ENCODE measurements at regions of chr6 and their contacts with region 1.

Region 1: DNA sequence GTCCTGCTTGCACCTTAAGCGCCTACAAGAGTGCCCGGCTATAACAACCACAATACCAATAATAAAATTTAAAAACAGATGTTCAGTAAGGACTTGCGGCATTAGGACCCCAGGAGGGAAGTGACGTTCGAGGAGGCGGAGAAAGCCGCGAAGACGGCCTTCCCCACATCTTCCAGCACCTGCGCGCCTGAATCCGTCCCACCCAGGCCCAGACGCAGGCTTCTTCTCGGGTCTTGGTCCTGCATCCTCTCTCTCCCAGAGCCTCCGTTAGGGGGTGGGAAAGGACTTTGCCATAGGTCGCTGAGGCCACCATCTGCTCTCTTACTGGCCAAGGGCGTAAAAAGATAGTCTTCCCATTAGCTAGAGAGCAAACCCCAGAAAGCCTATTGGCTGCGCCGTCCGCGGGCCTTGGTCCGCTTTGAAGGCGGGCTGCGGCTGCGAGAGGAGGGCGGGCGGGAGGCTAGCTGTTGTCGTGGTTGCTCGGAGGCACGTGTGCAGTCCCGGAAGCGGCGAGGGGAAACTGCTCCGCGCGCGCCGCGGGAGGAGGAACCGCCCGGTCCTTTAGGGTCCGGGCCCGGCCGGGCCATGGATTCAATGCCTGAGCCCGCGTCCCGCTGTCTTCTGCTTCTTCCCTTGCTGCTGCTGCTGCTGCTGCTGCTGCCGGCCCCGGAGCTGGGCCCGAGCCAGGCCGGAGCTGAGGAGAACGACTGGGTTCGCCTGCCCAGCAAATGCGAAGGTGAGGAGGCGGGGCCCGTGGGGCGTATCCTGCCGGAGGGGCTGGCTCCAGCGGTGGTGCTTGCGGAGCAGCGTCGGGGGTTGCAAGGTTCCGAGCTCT is at the start of gene CNPY3:
- DNase-seq: peak; percentile 97
- ATAC-seq: peak; percentile 94
- H3K4me3 ChIP-seq: peak within 1 kb of the TSS; percentile 71 to 79 (median 78)
- H3K27ac ChIP-seq: peak within 1 kb of the TSS; percentile 83
- H3K4me1 ChIP-seq: peaks cover 64% of the 10 kb centered on the region
- H3K27me3 ChIP-seq: no peaks in the 10 kb centered on the region; a peak in 1 of 5 replicates
- CTCF ChIP-seq: peak; percentile 46
- EP300 ChIP-seq: peak in 1 of 2 experiments; percentile 8; a peak in 1 of 4 replicates
- POLR2A ChIP-seq: peak; percentile 70 to 74
- RAD21 ChIP-seq: peak; percentile 44
- total RNA-seq, gene CNPY3: 31.4 and 60.2 TPM in 2 replicates

Region 2: DNA sequence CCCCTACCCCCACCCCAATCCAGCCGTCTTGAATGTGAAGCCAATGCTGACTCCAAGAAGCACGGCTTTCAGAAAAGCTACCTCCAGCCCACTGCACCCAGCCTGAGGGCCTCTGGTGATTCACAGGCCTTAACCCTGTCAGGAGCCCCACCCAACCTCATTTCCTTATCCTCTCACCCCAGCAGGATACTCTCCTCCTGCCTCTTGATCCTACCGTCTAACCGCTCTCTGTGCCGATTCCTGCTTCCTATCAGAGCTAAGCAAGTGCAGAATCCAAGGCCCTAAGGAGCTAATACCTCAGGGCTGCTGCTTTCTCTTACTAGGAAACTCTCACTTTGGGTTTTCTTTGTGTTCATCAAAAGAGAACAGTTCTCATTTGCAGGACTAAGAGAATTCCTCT is 524.7 kb before region 1 on chr6:
- CTCF ChIA-PET with region 1: no interaction called
- POLR2A ChIA-PET with region 1: no interaction called
- in situ Hi-C with region 1: no loop called
- intact Hi-C with region 1: no loop called
- DNase-seq: no peak
- ATAC-seq: no peak
- H3K4me3 ChIP-seq: no peak overlapping the region
- H3K27ac ChIP-seq: no peak overlapping the region
- H3K4me1 ChIP-seq: no peaks in the 10 kb centered on the region
- H3K27me3 ChIP-seq: peaks cover 0 to 20% of the 10 kb centered on the region in 2 experiments; a peak in 2 of 5 replicates
- CTCF ChIP-seq: no peak
- EP300 ChIP-seq: no peak
- POLR2A ChIP-seq: no peak
- RAD21 ChIP-seq: no peak

Region 3: GRCh38 chr6:42766141-42766670 is 163.0 kb before region 1 on chr6:
- CTCF ChIA-PET with region 1: no interaction called
- POLR2A ChIA-PET with region 1: no interaction called
- in situ Hi-C with region 1: no loop called
- intact Hi-C with region 1: no loop called
- DNase-seq: no peak
- ATAC-seq: no peak
- H3K4me3 ChIP-seq: no peak overlapping the region
- H3K27ac ChIP-seq: no peak overlapping the region
- H3K4me1 ChIP-seq: no peaks in the 10 kb centered on the region
- H3K27me3 ChIP-seq: no peaks in the 10 kb centered on the region
- CTCF ChIP-seq: no peak
- EP300 ChIP-seq: no peak
- POLR2A ChIP-seq: no peak
- RAD21 ChIP-seq: no peak

Region 4: DNA sequence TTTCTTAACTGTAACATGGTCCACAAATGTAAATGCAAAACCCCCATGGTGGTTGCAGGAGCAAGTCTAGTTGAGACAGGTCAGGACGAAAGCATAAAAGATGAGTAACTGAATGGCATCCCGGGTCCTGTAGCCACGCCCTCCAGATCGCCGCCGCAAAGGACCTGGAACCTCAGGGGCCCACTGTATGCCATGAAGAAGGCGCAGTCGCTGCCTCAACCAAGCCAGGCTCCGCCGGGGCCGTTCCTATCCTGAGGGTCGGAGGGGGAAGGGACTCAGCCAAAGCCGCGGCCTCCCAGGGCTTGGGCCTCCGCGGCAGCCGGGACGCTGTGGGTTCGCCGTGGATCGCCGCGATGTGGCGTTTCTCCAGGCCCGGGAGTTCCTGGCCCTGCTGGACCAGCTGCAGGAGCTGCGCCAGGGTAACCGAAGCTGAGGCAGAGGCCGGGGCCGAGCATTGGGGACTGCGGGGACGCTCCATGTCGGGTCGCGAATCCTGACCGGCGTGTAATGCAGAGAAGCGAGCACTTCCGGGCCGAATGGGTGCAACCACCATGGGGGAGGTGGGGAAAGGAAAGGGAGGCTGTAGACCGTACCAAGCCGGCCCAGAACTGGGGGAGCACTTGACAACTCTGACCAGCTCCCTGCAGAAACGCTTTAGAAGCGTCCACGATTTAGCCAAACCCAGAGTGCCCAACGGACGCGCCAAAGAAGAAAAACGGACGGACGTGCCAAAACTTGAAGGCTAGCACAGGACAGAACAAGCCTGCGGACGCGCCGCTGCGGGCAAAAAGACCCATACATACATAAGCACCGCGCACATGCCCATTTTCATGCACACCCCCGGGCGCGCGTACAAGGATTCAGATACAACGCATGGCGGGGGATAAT is 38.6 kb before region 1 on chr6:
- CTCF ChIA-PET with region 1: no interaction called
- POLR2A ChIA-PET with region 1: interaction called, 12 read pairs
- in situ Hi-C with region 1: no loop called
- intact Hi-C with region 1: no loop called
- DNase-seq: peak; percentile 95
- ATAC-seq: peak; percentile 91
- H3K4me3 ChIP-seq: peak overlapping the region; percentile 75 to 95 (median 86)
- H3K27ac ChIP-seq: peak overlapping the region; percentile 94
- H3K4me1 ChIP-seq: peaks cover 46% of the 10 kb centered on the region
- H3K27me3 ChIP-seq: no peaks in the 10 kb centered on the region
- CTCF ChIP-seq: 0 out of 2 replicates have a peak, but pooled peaks have one; percentile 36
- EP300 ChIP-seq: no peak
- POLR2A ChIP-seq: peak; percentile 92 to 95
- RAD21 ChIP-seq: peak; percentile 78

Region 5: GRCh38 chr6:42911171-42912021 is 17.8 kb before region 1 on chr6:
- CTCF ChIA-PET with region 1: no interaction called
- POLR2A ChIA-PET with region 1: interaction called, 21 read pairs
- in situ Hi-C with region 1: no loop called
- intact Hi-C with region 1: no loop called
- DNase-seq: no peak
- ATAC-seq: peak; percentile 85
- H3K4me3 ChIP-seq: peak overlapping the region; percentile 60 to 72 (median 61)
- H3K27ac ChIP-seq: peak overlapping the region; percentile 62
- H3K4me1 ChIP-seq: peaks cover 28% of the 10 kb centered on the region
- H3K27me3 ChIP-seq: peaks cover 2 to 4% of the 10 kb centered on the region in 2 experiments; a peak in 2 of 5 replicates
- CTCF ChIP-seq: peak; percentile 45; the same call in 1 of the 2 replicates
- EP300 ChIP-seq: no peak
- POLR2A ChIP-seq: 0 out of 4 replicates have a peak, but pooled peaks of 1 of the 2 experiments have one; percentile 37
- RAD21 ChIP-seq: no peak

Region 6: DNA sequence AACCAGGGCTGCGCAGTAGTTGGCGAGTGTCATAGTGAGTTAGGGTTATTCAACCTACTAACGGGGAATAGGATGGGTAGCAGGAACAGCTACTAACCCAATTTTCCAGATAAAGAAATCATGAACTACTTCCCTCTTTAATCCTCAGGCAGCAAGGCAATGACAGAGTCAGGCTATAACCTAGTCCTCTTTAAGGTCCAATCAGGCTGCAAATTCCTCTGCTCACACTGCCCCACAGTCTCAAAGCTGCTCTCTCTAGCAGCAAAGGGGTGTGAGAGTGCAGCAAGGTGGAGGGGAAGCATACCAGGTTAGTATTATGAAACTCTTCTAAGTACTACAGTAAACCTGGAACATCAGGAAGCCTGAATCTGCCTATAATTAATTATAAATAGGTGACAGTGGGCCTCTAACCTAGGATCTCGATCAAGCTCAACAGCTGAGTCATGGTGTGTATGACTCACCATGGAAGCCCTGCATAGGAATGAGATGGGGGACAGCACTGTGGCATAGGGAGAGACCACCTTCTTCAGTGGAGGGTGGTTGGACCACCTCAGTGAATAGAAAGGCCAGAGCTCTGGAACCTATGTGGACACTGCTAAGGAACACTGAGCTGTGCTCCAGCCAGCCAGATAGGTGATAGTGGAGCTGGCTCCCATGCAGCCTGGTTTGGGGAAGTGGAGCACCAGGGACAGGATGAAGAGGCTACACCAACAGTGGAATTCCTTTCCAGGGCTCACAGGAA is 41.8 kb after region 1 on chr6:
- CTCF ChIA-PET with region 1: no interaction called
- POLR2A ChIA-PET with region 1: interaction called, 14 read pairs
- in situ Hi-C with region 1: no loop called
- intact Hi-C with region 1: loop called (anchors 2 kb)
- DNase-seq: peak; percentile 32
- ATAC-seq: peak; percentile 39
- H3K4me3 ChIP-seq: no peak overlapping the region
- H3K27ac ChIP-seq: peak overlapping the region; percentile 30
- H3K4me1 ChIP-seq: peaks cover 39% of the 10 kb centered on the region
- H3K27me3 ChIP-seq: no peaks in the 10 kb centered on the region
- CTCF ChIP-seq: no peak
- EP300 ChIP-seq: no peak
- POLR2A ChIP-seq: no peak
- RAD21 ChIP-seq: no peak

Region 7: GRCh38 chr6:43021270-43022047 is 92.3 kb after region 1 on chr6 and contains the start of gene RRP36:
- CTCF ChIA-PET with region 1: no interaction called
- POLR2A ChIA-PET with region 1: interaction called, 17 read pairs
- in situ Hi-C with region 1: no loop called
- intact Hi-C with region 1: no loop called
- DNase-seq: peak; percentile 74
- ATAC-seq: peak; percentile 96
- H3K4me3 ChIP-seq: peak within 1 kb of the TSS; percentile 100
- H3K27ac ChIP-seq: peak within 1 kb of the TSS; percentile 77
- H3K4me1 ChIP-seq: peaks cover 30% of the 10 kb centered on the region
- H3K27me3 ChIP-seq: peaks cover 0 to 3% of the 10 kb centered on the region in 2 experiments; a peak in 1 of 5 replicates
- CTCF ChIP-seq: 0 out of 2 replicates have a peak, but pooled peaks have one; percentile 10
- EP300 ChIP-seq: no peak
- POLR2A ChIP-seq: peak; percentile 83 to 87
- RAD21 ChIP-seq: peak; percentile 48; the same call in 1 of the 2 replicates
- total RNA-seq, gene RRP36: 144 and 184 TPM in 2 replicates

Measured in HepG2 (cell line).